Pancreas (tissue), 10 donors: ENCODE measurements at regions of chr12 and their contacts with region 1.

Region 1: DNA sequence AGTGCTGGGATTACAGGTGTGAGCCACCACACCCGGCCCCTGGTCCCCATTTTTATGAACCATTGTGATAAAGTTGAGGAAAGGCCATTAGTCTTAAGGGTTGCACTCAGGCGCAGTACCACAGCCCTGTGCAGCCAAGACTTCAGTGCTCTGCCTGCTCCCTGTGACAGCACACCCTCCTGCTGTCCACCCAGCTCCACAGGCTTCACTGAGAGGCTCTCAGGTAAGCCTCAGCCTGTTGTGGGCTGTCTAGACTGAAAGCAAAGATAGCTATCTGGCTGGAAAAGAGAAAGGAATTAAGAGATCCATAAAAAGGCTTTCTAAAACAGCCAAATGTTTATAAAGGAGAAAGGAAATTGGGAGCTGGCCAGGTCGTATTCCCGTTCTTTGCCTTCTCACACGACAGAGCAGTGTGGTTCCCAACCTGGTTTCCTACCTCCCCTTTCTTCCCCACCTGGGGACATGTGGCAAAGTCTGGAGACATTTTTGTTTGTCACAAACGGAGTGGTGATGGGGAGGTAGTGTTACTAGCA is 19.1 kb upstream of the DNM1L start:
- DNase-seq: no peak
- ATAC-seq: no peak
- H3K4me3 ChIP-seq: no peak overlapping the region
- H3K27ac ChIP-seq: no peak overlapping the region
- H3K4me1 ChIP-seq: no peaks in the 10 kb centered on the region
- H3K27me3 ChIP-seq: no peaks in the 10 kb centered on the region
- CTCF ChIP-seq: no peak

Region 2: DNA sequence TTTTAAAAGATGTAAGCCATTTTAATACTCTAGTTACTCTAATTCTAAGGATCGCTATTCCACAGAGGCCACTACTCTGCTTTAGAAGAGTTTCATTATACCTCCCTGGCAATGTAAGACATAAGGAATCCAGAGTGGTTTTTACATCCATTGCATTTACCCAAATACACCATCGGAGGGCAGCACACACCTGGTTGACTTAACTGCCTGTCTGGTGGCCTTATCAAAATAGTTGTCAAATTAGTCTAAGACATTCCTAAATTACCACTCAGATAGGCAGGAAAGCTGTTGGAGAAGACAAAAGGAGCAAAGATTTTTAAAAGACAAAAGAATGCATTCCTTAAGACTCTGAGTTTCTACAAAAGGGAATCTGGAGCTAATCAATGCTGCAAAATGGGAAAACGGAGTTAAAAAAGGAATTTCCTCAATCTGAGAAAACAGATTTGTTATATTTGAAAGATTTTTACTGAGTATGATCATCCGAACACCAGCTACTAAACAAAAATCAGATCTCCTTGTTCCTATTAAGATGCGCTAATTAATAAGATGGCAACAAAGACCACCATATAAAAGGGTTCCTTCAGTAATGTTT is 294.4 kb before region 1 on chr12:
- intact Hi-C with region 1: loop called in 2 of 3 experiments (anchors 5 kb)
- DNase-seq: peak in 4 of 6 donors; percentile 27 to 67 (median 39)
- ATAC-seq: peak; percentile 77 to 97 (median 92)
- H3K4me3 ChIP-seq: no peak overlapping the region
- H3K27ac ChIP-seq: no peak overlapping the region
- H3K4me1 ChIP-seq: peaks cover 0 to 15% (median 0%) of the 10 kb centered on the region in 3 donors
- H3K27me3 ChIP-seq: no peaks in the 10 kb centered on the region
- CTCF ChIP-seq: peak; percentile 38 to 77 (median 74)

Region 3: GRCh38 chr12:32455607-32456071 is 204.3 kb before region 1 on chr12:
- intact Hi-C with region 1: loop called in 2 of 3 experiments (anchors 5 to 10 kb)
- DNase-seq: no peak
- ATAC-seq: peak; percentile 66 to 88 (median 80)
- H3K4me3 ChIP-seq: peak overlapping the region in 1 of 4 donors; percentile 13
- H3K27ac ChIP-seq: peak overlapping the region in 2 of 4 donors; percentile 29 to 48
- H3K4me1 ChIP-seq: peaks cover 25 to 41% (median 29%) of the 10 kb centered on the region in 3 donors
- H3K27me3 ChIP-seq: no peaks in the 10 kb centered on the region
- CTCF ChIP-seq: peak in 3 of 4 donors; percentile 24 to 45 (median 41)

Region 4: DNA sequence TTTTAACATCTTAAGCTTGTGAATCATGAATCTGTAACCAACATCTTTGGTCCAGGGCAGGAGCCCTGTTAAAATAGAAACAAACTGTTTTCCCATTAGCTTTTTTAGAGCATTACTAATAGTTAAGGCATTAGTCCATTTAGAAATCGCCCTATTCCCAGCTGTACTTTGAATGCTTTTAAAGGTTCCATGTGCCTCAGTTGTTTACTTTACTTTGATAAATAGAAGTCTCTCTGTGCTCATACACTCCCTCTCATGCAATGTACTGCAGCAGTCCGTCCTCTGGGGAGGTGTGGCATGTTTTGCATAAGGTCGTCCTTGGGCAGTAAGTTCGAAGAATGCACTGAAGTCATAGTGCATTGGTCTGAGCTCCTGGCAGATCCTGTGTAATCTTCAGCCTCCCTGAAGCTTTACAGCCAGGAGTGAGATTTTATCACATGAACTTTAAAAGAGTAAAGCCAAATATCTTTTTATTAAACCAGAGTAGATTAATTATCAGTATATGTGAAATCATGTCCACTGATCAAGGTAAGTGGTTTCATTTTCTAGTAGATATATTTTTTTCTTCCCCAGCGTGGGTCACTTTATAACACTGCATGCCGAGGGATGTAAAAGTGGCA is 125.9 kb before region 1 on chr12:
- intact Hi-C with region 1: no loop called
- DNase-seq: peak in 4 of 6 donors; percentile 51 to 81 (median 68)
- ATAC-seq: peak; percentile 83 to 90 (median 88)
- H3K4me3 ChIP-seq: peak overlapping the region in 3 of 4 donors; percentile 10 to 35 (median 27)
- H3K27ac ChIP-seq: peak overlapping the region; percentile 46 to 68 (median 60)
- H3K4me1 ChIP-seq: peaks cover 30 to 49% (median 46%) of the 10 kb centered on the region in 3 donors
- H3K27me3 ChIP-seq: no peaks in the 10 kb centered on the region
- CTCF ChIP-seq: no peak

Region 5: GRCh38 chr12:33116284-33116683 is 456.3 kb after region 1 on chr12:
- intact Hi-C with region 1: no loop called
- DNase-seq: no peak
- ATAC-seq: no peak
- H3K4me3 ChIP-seq: no peak overlapping the region
- H3K27ac ChIP-seq: no peak overlapping the region
- H3K4me1 ChIP-seq: no peaks in the 10 kb centered on the region
- H3K27me3 ChIP-seq: no peaks in the 10 kb centered on the region
- CTCF ChIP-seq: no peak